ENCODE measurements at regions of chr2 and their contacts with region 1.

Region 1: DNA sequence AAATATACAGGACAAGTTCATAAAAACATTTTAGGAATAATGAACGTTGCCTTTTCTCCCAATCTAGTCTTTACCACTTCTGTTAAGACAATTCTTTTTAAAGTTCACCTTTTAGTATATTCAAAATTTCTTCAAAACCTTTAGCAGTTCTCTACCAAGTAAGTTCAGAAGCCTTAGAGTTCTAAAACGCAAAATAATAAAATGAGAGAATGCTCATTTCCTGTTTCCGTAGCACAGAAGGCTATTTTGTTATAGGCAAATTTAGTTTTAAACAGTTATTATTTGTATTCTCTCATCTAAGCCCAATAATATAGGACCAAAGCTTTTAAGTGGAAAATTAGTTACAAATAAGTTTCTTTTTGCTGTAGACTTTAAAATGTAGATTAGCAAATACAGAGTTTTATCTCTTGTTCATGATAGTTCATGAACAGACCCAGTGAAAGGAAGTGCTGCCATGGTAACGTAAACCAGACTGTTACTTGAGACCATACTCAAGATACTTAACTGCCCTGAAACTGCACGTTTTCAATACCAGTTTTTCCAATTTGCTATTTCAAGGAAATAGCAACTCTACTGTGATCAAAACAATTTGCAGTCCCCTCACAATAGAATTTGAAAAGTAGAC is 173.1 kb upstream of the STON1 start:
- DNase-seq: peak in 16 of 35 experiments; percentile 3 to 73 (median 34)
- ATAC-seq: peak; percentile 72 to 93 (median 85)
- H3K4me3 ChIP-seq: no peak overlapping the region
- H3K4me3 Mint-ChIP-seq: peak overlapping the region; percentile 60 to 63 (median 62)
- H3K27ac ChIP-seq: peak overlapping the region; percentile 87
- H3K27ac Mint-ChIP-seq: peak overlapping the region; percentile 92 to 97
- H3K4me1 ChIP-seq: peaks cover 21 to 51% of the 10 kb centered on the region in 2 experiments
- H3K4me1 Mint-ChIP-seq: peaks cover 68 to 75% (median 73%) of the 10 kb centered on the region in 3 donors
- H3K27me3 ChIP-seq: no peaks in the 10 kb centered on the region
- H3K27me3 Mint-ChIP-seq: no peaks in the 10 kb centered on the region

Region 2: GRCh38 chr2:48345176-48345575 is 11.6 kb before region 1 on chr2:
- CTCF ChIA-PET with region 1: no interaction called
- POLR2A ChIA-PET with region 1: interaction called in 1 of 2 experiments, 14 read pairs
- DNase-seq: no peak
- ATAC-seq: no peak
- H3K4me3 ChIP-seq: no peak overlapping the region
- H3K4me3 Mint-ChIP-seq: peak overlapping the region in 1 of 3 donors; percentile 60
- H3K27ac ChIP-seq: peak overlapping the region; percentile 74
- H3K27ac Mint-ChIP-seq: peak overlapping the region; percentile 77 to 80
- H3K4me1 ChIP-seq: peaks cover 7 to 18% of the 10 kb centered on the region in 2 experiments
- H3K4me1 Mint-ChIP-seq: peaks cover 50 to 67% (median 62%) of the 10 kb centered on the region in 3 donors
- H3K27me3 ChIP-seq: no peaks in the 10 kb centered on the region
- H3K27me3 Mint-ChIP-seq: no peaks in the 10 kb centered on the region

Measured in T-cell (primary cell).